ENCODE measurements at regions of chr1 and their contacts with region 1.

Region 1: GRCh38 chr1:158035976-158036583 is 42.6 kb downstream of the KIRREL1 start:
- DNase-seq: peak; percentile 48 to 74
- H3K4me3 ChIP-seq: no peak overlapping the region
- H3K27ac ChIP-seq: peak overlapping the region in 1 of 2 donors; percentile 47
- H3K4me1 ChIP-seq: peaks cover 0 to 13% of the 10 kb centered on the region in 2 donors
- H3K27me3 ChIP-seq: no peaks in the 10 kb centered on the region
- CTCF ChIP-seq: peak; percentile 70 to 75 (median 74)
- POLR2A ChIP-seq: no peak

Region 2: GRCh38 chr1:157971769-157972168 is 64.3 kb before region 1 on chr1:
- intact Hi-C with region 1: loop called (anchors 2 kb)
- DNase-seq: no peak
- H3K4me3 ChIP-seq: no peak overlapping the region
- H3K27ac ChIP-seq: no peak overlapping the region
- H3K4me1 ChIP-seq: no peaks in the 10 kb centered on the region
- H3K27me3 ChIP-seq: no peaks in the 10 kb centered on the region
- CTCF ChIP-seq: no peak
- POLR2A ChIP-seq: no peak

Region 3: GRCh38 chr1:157992031-157992832 is 43.8 kb before region 1 on chr1:
- intact Hi-C with region 1: loop called (anchors 5 kb)
- DNase-seq: peak; percentile 86 to 87
- H3K4me3 ChIP-seq: no peak overlapping the region
- H3K27ac ChIP-seq: peak overlapping the region; percentile 97 to 100
- H3K4me1 ChIP-seq: peaks cover 0 to 6% of the 10 kb centered on the region in 2 donors
- H3K27me3 ChIP-seq: no peaks in the 10 kb centered on the region
- CTCF ChIP-seq: peak; percentile 93 to 97 (median 96)
- POLR2A ChIP-seq: no peak

Region 4: DNA sequence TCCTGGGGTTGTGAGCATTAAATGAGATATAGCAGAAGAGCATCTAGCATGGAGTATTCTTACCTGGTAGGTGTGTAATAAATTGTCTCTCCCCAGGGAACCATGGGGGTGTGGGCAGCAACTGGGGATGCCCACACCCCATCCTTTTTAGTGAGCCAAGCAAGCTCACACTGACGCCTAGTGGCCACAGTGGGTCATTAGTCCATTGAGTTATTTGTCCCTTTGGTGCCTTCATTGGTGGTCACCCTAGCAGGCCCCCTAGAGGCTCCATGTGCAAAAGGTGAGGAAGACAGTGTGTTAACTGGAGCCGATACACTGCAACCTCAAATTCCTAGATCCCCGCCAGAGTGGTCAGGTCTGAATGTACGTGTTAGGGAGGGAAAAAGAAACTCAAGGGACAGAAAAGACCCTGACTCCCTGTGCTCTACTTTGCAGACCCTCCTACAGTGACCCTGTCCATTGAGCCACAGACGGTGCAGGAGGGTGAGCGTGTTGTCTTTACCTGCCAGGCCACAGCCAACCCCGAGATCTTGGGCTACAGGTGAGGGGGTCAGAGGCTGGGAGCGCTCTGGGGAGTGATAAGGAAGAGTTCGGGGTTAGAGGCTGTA is 51.3 kb after region 1 on chr1:
- intact Hi-C with region 1: loop called (anchors 10 kb)
- DNase-seq: peak; percentile 62 to 77
- H3K4me3 ChIP-seq: no peak overlapping the region
- H3K27ac ChIP-seq: no peak overlapping the region
- H3K4me1 ChIP-seq: no peaks in the 10 kb centered on the region
- H3K27me3 ChIP-seq: no peaks in the 10 kb centered on the region
- CTCF ChIP-seq: peak; percentile 83 to 92 (median 88)
- POLR2A ChIP-seq: no peak

Region 5: GRCh38 chr1:158117854-158118704 is 82.0 kb after region 1 on chr1:
- intact Hi-C with region 1: no loop called
- DNase-seq: peak; percentile 42 to 58
- H3K4me3 ChIP-seq: peak overlapping the region in 1 of 2 donors; percentile 17
- H3K27ac ChIP-seq: peak overlapping the region; percentile 20 to 41
- H3K4me1 ChIP-seq: no peaks in the 10 kb centered on the region
- H3K27me3 ChIP-seq: no peaks in the 10 kb centered on the region
- CTCF ChIP-seq: peak; percentile 49 to 58 (median 56)
- POLR2A ChIP-seq: no peak

Measured in uterus (tissue), 4 donors.